Activated CD4-positive, alpha-beta memory T cell treated with anti-CD3 and anti-CD28 coated beads for 36 hours (primary cell): ENCODE measurements at regions of chr1 and their contacts with region 1.

Region 1: GRCh38 chr1:193059268-193060225 is at the starts of genes RO60 and UCHL5:
- DNase-seq: peak; percentile 98
- H3K4me3 Mint-ChIP-seq: peak within 1 kb of the TSS; percentile 92
- H3K27ac Mint-ChIP-seq: peak within 1 kb of the TSS; percentile 98
- H3K4me1 Mint-ChIP-seq: peaks cover 57% of the 10 kb centered on the region
- H3K27me3 Mint-ChIP-seq: peaks cover 1% of the 10 kb centered on the region
- total RNA-seq, gene RO60: 56.5 to 65.8 TPM
- total RNA-seq, gene UCHL5: 72.1 to 77.5 TPM

Region 2: DNA sequence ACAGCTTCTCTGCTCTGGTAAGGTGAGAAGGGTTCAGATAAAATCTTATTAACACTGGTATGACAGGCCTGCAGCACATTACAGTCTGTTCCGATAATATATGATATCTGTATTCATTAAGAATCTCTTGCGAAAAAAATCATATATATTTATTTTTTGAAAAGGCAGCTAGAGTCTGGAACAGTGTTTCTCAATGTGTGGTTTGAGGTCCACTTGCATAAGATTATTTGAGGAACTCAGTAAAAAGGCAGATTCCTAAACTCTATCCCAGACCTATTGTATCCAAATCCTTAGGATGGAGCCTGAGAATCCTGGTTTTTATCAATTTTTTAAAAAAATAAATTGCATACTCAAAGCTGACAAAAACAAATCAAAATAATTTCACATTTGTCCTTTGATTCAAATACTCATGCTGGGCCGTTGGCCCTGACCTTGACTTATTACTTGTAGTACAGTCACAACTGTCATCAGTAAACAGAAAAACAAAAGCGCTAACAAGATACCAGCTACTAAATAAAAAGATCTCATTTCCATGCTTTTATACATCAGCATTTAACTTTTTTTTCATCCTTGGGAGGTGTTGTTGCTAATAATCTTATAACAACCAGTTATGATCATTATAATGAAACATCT is 190.1 kb before region 1 on chr1:
- CTCF ChIA-PET with region 1: no interaction called
- POLR2A ChIA-PET with region 1: no interaction called
- intact Hi-C with region 1: no loop called
- DNase-seq: no peak
- H3K4me3 Mint-ChIP-seq: no peak overlapping the region
- H3K27ac Mint-ChIP-seq: no peak overlapping the region
- H3K4me1 Mint-ChIP-seq: no peaks in the 10 kb centered on the region
- H3K27me3 Mint-ChIP-seq: peaks cover 3% of the 10 kb centered on the region

Region 3: GRCh38 chr1:192983349-192983980 is 76.1 kb before region 1 on chr1:
- CTCF ChIA-PET with region 1: no interaction called
- POLR2A ChIA-PET with region 1: interaction called, 3 read pairs
- intact Hi-C with region 1: loop called (anchors 1 kb)
- DNase-seq: peak; percentile 68
- H3K4me3 Mint-ChIP-seq: no peak overlapping the region
- H3K27ac Mint-ChIP-seq: peak overlapping the region; percentile 82
- H3K4me1 Mint-ChIP-seq: peaks cover 45% of the 10 kb centered on the region
- H3K27me3 Mint-ChIP-seq: no peaks in the 10 kb centered on the region

Region 4: DNA sequence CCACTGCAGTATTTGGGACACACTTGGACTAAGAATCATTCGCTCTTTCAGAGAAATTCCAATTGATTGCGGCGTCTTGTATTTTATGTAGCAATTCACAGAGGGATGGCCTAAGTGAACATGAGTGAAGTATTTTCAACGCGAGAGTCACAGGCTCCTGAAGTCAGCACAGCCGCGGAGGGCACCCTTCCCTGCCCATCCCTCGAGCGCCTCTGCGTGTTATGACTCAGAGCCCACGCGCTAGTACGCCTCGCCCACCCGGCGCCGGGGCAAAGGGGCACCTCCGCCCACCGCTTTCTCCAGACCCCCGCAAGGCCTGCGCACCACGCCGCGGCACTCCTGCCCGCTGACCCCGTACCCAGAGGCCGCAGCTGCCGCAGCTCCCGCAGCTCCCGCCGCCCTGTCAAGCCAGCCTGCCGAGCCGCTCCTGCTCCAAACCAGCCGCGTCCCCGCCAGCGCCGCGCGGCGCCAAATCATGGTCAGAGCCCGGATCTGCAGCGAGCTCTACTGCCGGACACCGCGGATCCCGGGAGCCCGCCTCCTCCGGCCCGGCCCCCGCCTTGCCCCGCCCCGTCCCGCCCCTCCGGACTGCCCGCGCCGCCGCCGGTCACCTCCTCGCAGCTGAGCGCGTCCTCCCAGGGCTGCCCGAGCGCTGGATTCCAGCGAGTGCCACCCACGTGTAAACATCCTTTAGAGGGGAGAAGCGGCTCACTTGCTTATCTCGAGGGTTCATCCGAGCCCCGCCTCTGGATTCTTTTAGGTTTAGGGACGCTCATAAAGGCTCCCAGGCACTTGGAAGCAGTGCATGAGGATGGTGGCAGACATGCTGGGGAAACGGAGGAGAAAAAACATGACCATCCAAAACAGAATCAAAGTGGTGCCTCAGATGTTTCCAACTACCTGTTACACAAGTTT is 45.6 kb after region 1 on chr1 and contains the start of gene GLRX2:
- CTCF ChIA-PET with region 1: interaction called, 6 read pairs
- POLR2A ChIA-PET with region 1: interaction called, 12 read pairs
- intact Hi-C with region 1: loop called (anchors 1 kb)
- DNase-seq: peak; percentile 73
- H3K4me3 Mint-ChIP-seq: peak within 1 kb of the TSS; percentile 89
- H3K27ac Mint-ChIP-seq: peak within 1 kb of the TSS; percentile 72
- H3K4me1 Mint-ChIP-seq: peaks cover 17% of the 10 kb centered on the region
- H3K27me3 Mint-ChIP-seq: no peaks in the 10 kb centered on the region
- total RNA-seq, gene GLRX2: 25.4 to 25.8 TPM

Region 5: DNA sequence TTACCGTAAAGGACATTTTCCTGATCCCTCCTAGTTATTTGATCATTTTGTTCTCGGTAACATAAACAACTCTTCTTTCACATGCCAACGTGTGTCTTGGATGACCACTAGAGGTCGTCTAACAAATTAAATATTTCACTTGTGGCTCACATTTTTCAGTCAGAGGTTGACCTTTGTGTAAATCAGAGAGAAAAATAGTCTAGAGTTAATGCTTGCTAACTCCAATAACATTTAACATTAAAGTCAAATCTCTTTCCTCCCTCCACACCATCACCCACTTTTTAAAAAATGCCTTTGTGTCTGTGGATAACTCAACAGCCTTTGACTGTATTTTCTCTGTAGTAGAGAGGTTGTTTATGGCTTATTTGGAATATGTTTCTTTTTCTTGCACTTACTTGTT is 347.4 kb after region 1 on chr1:
- CTCF ChIA-PET with region 1: no interaction called
- POLR2A ChIA-PET with region 1: no interaction called
- intact Hi-C with region 1: loop called (anchors 5 kb)
- DNase-seq: no peak
- H3K4me3 Mint-ChIP-seq: no peak overlapping the region
- H3K27ac Mint-ChIP-seq: no peak overlapping the region
- H3K4me1 Mint-ChIP-seq: peaks cover 29% of the 10 kb centered on the region
- H3K27me3 Mint-ChIP-seq: no peaks in the 10 kb centered on the region

Region 6: GRCh38 chr1:193685986-193686385 is 626.4 kb after region 1 on chr1:
- CTCF ChIA-PET with region 1: no interaction called
- POLR2A ChIA-PET with region 1: no interaction called
- intact Hi-C with region 1: no loop called
- DNase-seq: no peak
- H3K4me3 Mint-ChIP-seq: no peak overlapping the region
- H3K27ac Mint-ChIP-seq: no peak overlapping the region
- H3K4me1 Mint-ChIP-seq: no peaks in the 10 kb centered on the region
- H3K27me3 Mint-ChIP-seq: no peaks in the 10 kb centered on the region